Activated CD4-positive, alpha-beta memory T cell treated with anti-CD3 and anti-CD28 coated beads, Interleukin-2, amount 10 ng/mL, durations not matched to agents 7 days and 5 days (primary cell): ENCODE measurements at regions of chr2 and their contacts with region 1.

Region 1: DNA sequence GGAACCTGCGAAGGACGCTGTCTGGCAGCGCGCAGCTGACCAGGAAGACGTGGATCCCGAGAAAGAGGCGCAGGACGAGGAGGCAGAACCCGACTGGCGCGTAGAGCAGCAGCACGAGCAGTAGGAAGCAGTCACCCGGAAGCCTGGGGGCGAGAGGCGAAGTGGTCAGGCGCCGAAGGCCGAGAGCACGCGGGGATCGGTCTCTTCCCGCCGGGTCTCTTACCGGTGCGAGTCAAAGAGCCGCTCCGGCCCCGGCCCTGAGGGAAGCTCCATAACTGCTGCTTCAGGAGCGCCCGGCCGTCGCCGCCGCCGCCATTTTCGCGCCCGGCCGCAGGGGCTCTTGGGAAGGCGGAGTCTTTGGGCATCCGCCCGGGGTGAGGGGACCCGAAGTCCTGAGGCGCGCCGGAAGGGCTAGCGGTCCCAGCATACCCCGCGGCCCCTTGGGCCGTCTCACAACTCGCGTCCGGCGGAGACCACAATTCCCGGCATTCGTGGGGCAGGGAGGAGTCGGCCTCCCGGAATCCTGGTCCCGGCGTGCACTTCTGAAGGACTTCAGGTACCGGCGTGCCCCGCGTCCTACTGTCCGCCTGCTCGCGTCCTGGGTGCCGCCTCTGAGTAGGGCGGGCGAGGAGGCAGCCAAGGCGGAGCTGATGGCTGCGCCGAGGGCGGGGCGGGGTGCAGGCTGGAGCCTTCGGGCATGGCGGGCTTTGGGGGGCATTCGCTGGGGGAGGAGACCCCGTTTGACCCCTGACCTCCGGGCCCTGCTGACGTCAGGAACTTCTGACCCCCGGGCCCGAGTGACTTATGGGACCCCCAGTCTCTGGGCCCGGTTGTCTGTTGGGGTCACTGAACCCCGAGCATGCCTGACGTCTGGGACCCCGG is at the starts of genes AUP1 and HTRA2:
- DNase-seq: peak; percentile 95
- H3K4me3 Mint-ChIP-seq: peak within 1 kb of the TSS; percentile 97
- H3K27ac Mint-ChIP-seq: peak within 1 kb of the TSS; percentile 96
- H3K4me1 Mint-ChIP-seq: peaks cover 55% of the 10 kb centered on the region
- H3K27me3 Mint-ChIP-seq: no peaks in the 10 kb centered on the region
- total RNA-seq, gene AUP1: 118 to 119 TPM
- total RNA-seq, gene HTRA2: 49.2 to 51.1 TPM

Region 2: DNA sequence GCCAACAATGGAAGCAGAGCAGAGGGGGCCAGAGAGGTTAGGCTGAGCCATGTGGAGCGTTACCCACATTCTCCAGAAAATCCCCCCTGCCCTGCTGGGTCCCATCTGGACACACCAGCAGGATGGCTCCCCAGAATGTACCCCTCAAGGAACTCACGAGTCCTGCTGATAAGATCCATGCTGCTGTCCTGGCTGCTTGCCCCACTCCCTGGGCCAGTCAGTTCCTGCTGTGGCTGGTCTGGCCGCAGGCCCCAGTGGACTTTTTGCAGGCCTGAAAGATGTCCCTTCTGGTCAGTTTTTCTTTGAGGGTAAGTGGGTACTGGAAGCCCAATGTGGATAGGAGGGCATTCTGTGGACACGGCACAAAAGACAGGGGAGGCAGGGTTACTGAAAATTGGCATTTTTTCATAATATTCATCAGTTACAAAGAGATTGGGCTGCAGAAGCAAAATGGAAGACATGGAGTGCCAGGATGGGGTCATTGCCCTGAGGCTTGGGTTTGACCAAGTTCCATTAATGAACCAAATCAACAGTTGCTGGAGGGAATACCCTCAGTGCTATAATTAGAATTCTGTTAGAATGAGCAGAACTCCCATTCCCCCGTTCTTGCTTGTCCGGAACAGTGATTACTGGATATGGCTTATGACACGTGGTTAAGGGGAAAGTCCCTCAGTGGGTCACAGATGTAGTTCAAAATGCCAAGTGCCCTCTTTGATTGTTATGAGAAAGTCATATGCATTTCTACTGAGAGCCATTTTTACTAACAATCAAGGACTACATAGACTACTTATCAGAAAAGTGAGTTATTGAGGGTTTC is 225.1 kb before region 1 on chr2:
- CTCF ChIA-PET with region 1: no interaction called
- POLR2A ChIA-PET with region 1: no interaction called
- DNase-seq: no peak
- H3K4me3 Mint-ChIP-seq: no peak overlapping the region
- H3K27ac Mint-ChIP-seq: no peak overlapping the region
- H3K4me1 Mint-ChIP-seq: no peaks in the 10 kb centered on the region
- H3K27me3 Mint-ChIP-seq: peaks cover 2% of the 10 kb centered on the region

Region 3: DNA sequence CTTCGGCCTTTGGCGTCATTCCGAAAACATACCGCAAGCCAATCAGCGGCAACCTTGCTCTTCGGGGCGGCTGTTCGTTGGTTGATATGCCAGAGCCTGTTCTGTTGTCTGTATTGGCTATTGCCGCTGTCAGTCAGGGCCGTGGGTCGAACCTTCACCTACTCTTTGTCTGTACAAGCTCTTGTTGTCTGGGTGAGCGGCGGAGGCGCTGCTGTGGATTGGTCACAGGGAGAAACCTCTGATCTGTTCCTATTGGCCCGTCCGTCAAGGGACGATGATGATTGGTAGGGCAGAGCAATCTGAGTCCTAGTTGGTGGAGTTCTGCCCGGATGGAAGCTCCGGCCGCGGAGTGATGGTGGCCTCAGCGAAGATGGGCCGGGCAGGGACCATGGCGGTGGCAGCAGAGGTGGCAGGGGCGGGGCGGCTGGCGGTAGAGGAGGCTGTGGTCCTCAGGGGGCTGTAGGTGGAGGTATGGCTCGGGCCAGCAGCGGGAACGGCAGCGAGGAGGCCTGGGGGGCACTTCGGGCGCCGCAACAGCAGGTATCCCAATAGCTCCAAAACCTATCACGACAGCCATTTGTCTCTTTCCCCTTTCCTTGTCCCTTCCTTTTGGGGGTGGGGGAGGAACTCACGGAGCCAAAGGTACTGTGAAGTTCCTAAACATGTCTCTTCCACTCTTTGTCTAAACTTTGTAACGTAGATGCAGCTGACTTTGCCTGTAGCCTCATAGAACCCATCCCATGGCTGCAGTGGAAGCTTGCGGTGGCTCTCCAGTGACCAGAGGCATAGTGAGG is 71.3 kb before region 1 on chr2 and contains the start of gene WBP1:
- CTCF ChIA-PET with region 1: interaction called, 25 read pairs
- POLR2A ChIA-PET with region 1: interaction called, 48 read pairs
- DNase-seq: peak; percentile 100
- H3K4me3 Mint-ChIP-seq: peak within 1 kb of the TSS; percentile 88
- H3K27ac Mint-ChIP-seq: peak within 1 kb of the TSS; percentile 95
- H3K4me1 Mint-ChIP-seq: peaks cover 60% of the 10 kb centered on the region
- H3K27me3 Mint-ChIP-seq: no peaks in the 10 kb centered on the region
- total RNA-seq, gene WBP1: 58.3 to 60.4 TPM

Region 4: GRCh38 chr2:74472086-74472944 is 57.3 kb before region 1 on chr2 and contains the start of gene MRPL53:
- CTCF ChIA-PET with region 1: interaction called, 11 read pairs
- POLR2A ChIA-PET with region 1: interaction called, 26 read pairs
- DNase-seq: peak; percentile 97
- H3K4me3 Mint-ChIP-seq: peak within 1 kb of the TSS; percentile 97
- H3K27ac Mint-ChIP-seq: peak within 1 kb of the TSS; percentile 98
- H3K4me1 Mint-ChIP-seq: peaks cover 36% of the 10 kb centered on the region
- H3K27me3 Mint-ChIP-seq: no peaks in the 10 kb centered on the region
- total RNA-seq, gene MRPL53: 115 to 126 TPM

Region 5: GRCh38 chr2:74498500-74499266 is 30.9 kb before region 1 on chr2:
- CTCF ChIA-PET with region 1: interaction called, 9 read pairs
- POLR2A ChIA-PET with region 1: interaction called, 57 read pairs
- DNase-seq: peak; percentile 60
- H3K4me3 Mint-ChIP-seq: peak overlapping the region; percentile 80
- H3K27ac Mint-ChIP-seq: peak overlapping the region; percentile 77
- H3K4me1 Mint-ChIP-seq: peaks cover 44% of the 10 kb centered on the region
- H3K27me3 Mint-ChIP-seq: peaks cover 45% of the 10 kb centered on the region

Region 6: DNA sequence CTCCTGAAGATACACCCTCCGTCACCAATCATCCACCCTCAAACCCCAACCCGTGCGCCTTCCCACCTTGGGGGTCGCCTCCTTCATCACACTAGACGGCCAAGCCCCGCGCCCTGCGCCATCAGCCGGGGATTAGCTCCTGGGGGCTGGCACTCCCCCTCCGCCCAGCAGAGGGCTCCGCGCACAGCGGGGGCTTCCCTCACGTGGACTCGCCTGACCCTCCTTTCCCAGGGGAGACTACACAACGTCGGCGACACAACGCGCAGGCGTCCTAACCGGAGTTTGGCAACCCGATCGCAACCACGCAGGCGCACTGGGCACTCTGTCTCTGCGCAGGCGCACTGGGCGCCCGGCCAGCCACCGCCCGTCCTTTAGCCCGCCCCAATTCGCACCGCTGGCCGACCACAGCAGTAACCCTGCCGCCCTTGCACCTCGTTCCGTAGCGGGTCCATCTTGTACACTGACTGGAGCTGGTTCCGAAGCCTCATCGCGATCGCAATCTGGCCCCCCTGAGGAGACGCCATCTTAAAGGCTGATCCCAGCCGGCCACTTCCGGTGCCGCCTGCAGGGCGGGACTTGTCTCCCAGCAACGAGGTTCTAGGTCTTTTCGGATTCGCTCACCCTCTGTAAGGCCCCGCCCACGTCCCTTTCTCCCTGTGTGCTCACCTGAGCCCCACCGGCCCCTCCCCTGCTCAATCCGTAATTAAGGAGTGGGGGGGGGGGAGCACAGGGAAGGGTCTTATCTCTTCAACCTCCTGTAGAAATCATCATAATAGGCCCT is 22.3 kb before region 1 on chr2 and contains the start of gene PCGF1:
- CTCF ChIA-PET with region 1: interaction called, 9 read pairs
- POLR2A ChIA-PET with region 1: interaction called, 52 read pairs
- DNase-seq: peak; percentile 98
- H3K4me3 Mint-ChIP-seq: peak within 1 kb of the TSS; percentile 97
- H3K27ac Mint-ChIP-seq: peak within 1 kb of the TSS; percentile 99
- H3K4me1 Mint-ChIP-seq: peaks cover 69% of the 10 kb centered on the region
- H3K27me3 Mint-ChIP-seq: peaks cover 29% of the 10 kb centered on the region
- total RNA-seq, gene PCGF1: 23.0 to 31.4 TPM

Region 7: DNA sequence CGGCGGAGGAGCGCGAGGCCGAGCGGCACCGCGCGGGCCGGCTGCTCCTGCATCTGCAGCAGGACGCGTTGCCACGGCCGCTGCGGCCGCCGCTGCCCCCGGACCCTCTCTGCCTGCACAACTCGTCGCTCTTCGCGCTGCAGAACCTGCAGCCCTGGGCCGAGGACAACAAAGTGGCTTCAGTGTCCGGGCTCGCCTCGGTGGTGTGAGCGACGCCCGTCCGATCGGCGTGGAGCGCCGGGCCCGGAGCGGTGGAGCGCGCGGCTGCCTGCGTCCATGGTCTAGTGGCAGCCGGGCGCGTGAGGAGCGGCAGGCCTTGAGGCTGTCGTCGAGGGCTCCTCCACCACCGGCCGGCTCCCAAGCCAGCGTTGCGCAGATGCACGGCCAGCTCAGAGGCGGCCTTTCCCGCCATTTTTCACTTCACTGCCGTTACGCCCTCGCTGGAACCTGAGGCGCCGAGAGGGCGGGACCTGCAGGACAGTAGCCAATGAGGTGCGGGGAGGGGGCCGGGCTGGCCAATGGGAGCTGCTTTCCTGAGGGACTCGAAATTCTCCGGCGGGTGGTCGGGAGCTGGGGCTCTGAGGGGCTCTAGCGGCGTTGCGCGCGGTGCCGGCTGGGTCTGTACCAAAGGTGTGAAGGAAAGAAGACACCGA is 13.5 kb before region 1 on chr2:
- CTCF ChIA-PET with region 1: interaction called, 4 read pairs
- POLR2A ChIA-PET with region 1: interaction called, 64 read pairs
- DNase-seq: peak; percentile 81
- H3K4me3 Mint-ChIP-seq: peak overlapping the region; percentile 64
- H3K27ac Mint-ChIP-seq: no peak overlapping the region
- H3K4me1 Mint-ChIP-seq: peaks cover 35% of the 10 kb centered on the region
- H3K27me3 Mint-ChIP-seq: peaks cover 80% of the 10 kb centered on the region

Region 8: GRCh38 chr2:74553892-74554645 is 24.5 kb after region 1 on chr2 and contains the start of gene LOXL3:
- CTCF ChIA-PET with region 1: interaction called, 6 read pairs
- POLR2A ChIA-PET with region 1: interaction called, 27 read pairs
- DNase-seq: peak; percentile 84
- H3K4me3 Mint-ChIP-seq: peak within 1 kb of the TSS; percentile 97
- H3K27ac Mint-ChIP-seq: peak within 1 kb of the TSS; percentile 94
- H3K4me1 Mint-ChIP-seq: peaks cover 21% of the 10 kb centered on the region
- H3K27me3 Mint-ChIP-seq: peaks cover 19% of the 10 kb centered on the region
- total RNA-seq, gene LOXL3: 0.60 to 0.70 TPM